ENCODE measurements at regions of chr15 and their contacts with region 1.

Region 1: GRCh38 chr15:98513428-98513991 is 134.8 kb upstream of the IGF1R start:
- DNase-seq: no peak
- H3K4me3 ChIP-seq: no peak overlapping the region
- H3K27ac ChIP-seq: no peak overlapping the region
- H3K4me1 ChIP-seq: no peaks in the 10 kb centered on the region
- H3K27me3 ChIP-seq: no peaks in the 10 kb centered on the region
- CTCF ChIP-seq: no peak

Region 2: DNA sequence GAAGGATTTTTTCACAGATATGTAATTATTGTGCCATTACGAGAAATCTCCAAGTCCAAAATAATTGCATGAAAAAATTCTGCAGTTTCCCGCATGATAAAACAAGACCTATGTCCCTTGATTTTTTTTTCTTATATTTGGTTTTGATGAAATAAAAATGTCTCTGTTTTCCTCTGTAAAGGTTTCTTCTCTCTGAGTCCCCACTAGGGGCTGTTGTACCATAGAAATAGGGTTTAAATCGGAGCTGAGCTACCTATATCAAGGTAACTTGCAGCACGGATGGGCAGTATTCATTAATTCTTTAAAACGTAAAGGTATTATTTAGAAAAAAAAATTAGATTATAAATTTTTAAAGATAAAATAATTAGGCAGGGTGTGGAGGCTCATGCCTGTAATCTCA is 68.2 kb after region 1 on chr15:
- intact Hi-C with region 1: no loop called
- DNase-seq: no peak
- H3K4me3 ChIP-seq: no peak overlapping the region
- H3K27ac ChIP-seq: no peak overlapping the region
- H3K4me1 ChIP-seq: peaks cover 0 to 4% (median 2%) of the 10 kb centered on the region in 4 donors
- H3K27me3 ChIP-seq: peaks cover 0 to 78% of the 10 kb centered on the region in 2 donors
- CTCF ChIP-seq: no peak

Region 3: DNA sequence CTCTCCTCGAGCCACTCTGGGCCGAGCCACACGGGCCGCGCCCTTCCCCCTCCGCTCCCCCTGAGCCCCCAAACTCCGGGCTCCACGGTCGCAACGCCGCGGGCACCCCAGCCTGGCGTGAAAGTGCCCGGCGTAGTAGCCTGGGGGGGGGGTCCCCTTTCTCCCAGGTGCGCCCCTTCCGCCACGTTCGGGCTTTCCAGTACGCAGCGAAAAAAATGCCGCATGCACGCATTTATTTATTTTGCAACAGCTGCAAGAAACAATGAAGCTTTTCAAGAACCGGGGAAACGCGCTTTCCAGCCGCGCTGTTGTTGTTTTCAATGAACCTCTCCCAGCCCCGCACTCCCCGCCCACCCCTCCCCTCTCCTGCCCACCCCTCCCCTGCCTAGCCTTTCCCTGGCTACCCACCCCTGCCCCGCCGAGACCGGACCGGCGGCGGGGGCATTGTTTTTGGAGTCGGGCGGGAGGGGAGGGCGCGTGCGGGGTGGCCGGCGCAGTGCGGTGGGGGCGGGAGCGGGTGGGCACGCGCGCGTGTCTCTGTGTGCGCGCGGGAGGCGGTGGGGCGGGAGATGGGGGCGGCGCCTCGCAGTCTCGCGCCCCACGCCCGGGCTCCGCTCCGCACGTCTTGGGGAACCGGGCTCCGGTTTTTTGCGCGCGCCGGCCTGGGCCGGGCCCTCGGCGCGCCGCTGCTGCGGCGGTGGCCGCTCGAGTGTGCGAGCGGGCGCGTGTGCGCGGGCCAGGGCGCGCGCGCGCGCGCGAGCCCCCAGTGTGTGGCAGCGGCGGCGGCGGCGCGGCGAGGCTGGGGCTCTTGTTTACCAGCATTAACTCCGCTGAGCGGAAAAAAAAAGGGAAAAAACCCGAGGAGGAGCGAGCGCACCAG is 134.5 kb after region 1 on chr15 and contains the start of gene IGF1R:
- intact Hi-C with region 1: loop called (anchors 2 kb)
- DNase-seq: peak; percentile 86 to 92
- H3K4me3 ChIP-seq: peak within 1 kb of the TSS; percentile 90 to 95
- H3K27ac ChIP-seq: peak within 1 kb of the TSS; percentile 96 to 97
- H3K4me1 ChIP-seq: peaks cover 0 to 7% (median 0%) of the 10 kb centered on the region in 4 donors
- H3K27me3 ChIP-seq: no peaks in the 10 kb centered on the region
- CTCF ChIP-seq: peak in 1 of 2 experiments; percentile 10